ENCODE measurements at regions of chr17 and their contacts with region 1.

Region 1: GRCh38 chr17:66255112-66255511 is 25.9 kb upstream of the APOH start:
- DNase-seq: peak; percentile 84
- H3K4me3 Mint-ChIP-seq: peak overlapping the region; percentile 66
- H3K27ac Mint-ChIP-seq: peak overlapping the region; percentile 52
- H3K4me1 Mint-ChIP-seq: peaks cover 15% of the 10 kb centered on the region
- H3K27me3 Mint-ChIP-seq: no peaks in the 10 kb centered on the region

Region 2: GRCh38 chr17:65914784-65915350 is 340.2 kb before region 1 on chr17:
- intact Hi-C with region 1: no loop called
- DNase-seq: peak; percentile 61
- H3K4me3 Mint-ChIP-seq: peak overlapping the region; percentile 6
- H3K27ac Mint-ChIP-seq: peak overlapping the region; percentile 80
- H3K4me1 Mint-ChIP-seq: peaks cover 13% of the 10 kb centered on the region
- H3K27me3 Mint-ChIP-seq: no peaks in the 10 kb centered on the region

Region 3: DNA sequence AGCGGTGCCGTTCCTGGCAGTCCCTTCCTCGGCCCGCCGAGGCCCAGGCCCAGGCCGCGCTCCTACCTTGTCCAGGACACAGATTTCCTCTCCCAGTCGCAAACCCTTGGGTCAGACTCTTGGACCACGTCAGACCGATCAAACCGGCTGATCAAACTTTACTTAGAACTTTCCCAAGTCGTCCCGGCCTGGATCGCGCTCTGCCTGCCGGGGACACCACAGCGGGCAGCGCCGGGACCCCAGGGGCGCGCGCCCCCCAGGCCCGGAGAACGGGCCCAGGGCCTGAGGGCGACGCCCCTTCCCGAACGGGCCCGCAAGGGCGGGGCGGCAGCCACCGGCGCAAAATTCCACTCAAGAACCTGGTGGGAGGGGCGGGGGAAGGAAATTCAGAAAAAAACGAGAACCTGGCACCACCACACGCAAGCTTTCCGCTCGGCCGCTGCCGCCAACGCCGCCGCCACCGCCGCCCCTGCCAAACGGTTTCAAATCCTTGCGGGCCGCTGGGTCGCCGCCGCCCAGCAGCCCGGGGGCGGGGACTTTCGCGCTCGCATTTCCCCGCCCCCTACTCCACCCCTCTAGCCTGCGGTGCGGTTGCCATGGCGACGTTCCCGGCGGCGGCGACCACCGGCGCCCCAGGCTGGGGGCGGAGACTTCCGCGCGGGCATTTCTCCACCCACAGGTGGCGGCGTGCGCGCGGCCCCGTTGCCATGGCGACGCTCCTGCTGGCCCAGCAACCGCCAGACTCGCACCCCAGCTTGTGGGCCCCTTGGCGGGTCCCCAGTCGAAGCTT is 63.3 kb before region 1 on chr17 and contains the start of gene CEP112:
- intact Hi-C with region 1: no loop called
- DNase-seq: peak; percentile 96
- H3K4me3 Mint-ChIP-seq: peak within 1 kb of the TSS; percentile 85
- H3K27ac Mint-ChIP-seq: peak within 1 kb of the TSS; percentile 84
- H3K4me1 Mint-ChIP-seq: peaks cover 15% of the 10 kb centered on the region
- H3K27me3 Mint-ChIP-seq: peaks cover 2% of the 10 kb centered on the region
- total RNA-seq, gene CEP112: 1.3 and 2.0 TPM in 2 replicates

Region 4: GRCh38 chr17:66426397-66427033 is 171.4 kb after region 1 on chr17:
- intact Hi-C with region 1: loop called (anchors 1 kb)
- DNase-seq: peak; percentile 87
- H3K4me3 Mint-ChIP-seq: peak overlapping the region; percentile 28
- H3K27ac Mint-ChIP-seq: peak overlapping the region; percentile 59
- H3K4me1 Mint-ChIP-seq: peaks cover 66% of the 10 kb centered on the region
- H3K27me3 Mint-ChIP-seq: no peaks in the 10 kb centered on the region

Region 5: DNA sequence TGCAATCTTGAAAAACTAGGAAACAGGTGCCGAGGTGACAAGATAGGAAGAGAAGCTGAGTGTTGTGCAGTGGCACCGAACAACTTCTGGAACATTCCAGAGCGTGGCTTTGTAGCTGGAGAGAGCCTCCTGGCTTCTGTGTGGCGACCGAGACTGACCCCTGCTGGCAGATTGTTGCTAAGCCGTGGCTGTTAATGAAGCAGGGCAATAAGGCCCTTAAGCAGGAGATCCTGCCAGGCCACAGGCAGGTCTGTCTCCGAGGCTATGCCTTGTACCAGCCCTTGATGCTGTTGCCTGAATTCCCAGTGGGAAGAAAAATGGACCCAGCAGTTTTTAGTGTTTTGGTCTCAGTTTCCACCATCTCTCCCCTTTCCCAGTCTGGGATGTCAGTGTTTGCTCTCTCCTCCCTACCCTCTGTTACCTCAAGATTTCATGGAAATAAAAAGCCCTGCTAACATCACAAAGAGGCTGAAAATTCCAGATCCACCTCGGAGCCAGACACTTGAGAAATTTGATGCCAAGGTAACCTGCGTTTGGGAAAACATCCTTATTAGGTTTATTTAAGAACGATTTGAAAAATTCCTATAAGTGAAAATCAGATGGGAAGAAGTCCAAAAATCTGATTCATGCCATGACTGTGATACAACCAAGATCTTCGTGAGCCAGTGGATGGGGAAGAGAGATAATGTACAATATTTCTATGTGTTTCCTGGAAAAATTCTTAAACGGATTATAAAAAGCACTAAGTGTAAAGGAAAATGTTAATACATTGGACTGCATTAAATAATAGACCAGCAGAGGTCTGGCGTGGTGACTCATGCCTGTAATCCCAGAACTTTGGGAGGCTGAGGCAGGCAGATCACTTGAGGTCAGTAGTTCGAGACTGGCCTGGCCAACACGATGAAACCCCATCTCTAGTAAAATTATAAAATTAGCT is 312.4 kb after region 1 on chr17:
- intact Hi-C with region 1: loop called (anchors 1 kb)
- DNase-seq: peak; percentile 93
- H3K4me3 Mint-ChIP-seq: no peak overlapping the region
- H3K27ac Mint-ChIP-seq: peak overlapping the region; percentile 14
- H3K4me1 Mint-ChIP-seq: peaks cover 34% of the 10 kb centered on the region
- H3K27me3 Mint-ChIP-seq: no peaks in the 10 kb centered on the region

Region 6: DNA sequence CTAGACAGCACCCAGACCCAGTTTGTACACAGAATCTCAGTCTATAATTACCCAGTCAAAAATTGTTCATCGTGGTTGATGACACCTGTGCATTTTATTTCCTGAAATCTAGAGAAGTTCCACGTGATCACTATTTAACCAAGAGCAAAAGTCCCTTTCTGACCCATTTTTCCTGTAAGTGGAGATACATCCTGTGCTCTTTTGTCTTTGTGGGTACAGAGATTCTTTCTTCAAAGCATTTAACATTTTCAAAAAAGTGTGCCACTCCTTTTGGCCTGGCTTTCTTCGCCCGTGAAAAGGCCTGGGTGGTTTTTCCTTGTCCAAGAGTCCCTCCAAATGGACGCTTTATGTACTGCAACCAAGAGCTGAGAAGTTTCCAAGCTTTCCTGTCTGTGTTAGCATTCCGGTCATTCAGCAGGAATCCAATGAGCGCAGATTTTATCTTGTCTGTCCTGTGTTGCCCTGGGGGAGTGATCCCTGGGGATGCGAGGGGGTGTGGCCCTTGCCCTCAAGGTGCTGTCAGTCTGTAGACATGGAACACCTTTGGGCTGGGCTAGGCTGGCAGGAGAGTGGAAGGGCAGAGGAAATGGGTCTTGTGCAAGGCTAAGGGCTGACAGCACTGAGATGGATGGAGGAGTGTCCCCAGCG is 418.7 kb after region 1 on chr17:
- intact Hi-C with region 1: loop called (anchors 1 kb)
- DNase-seq: peak; percentile 86
- H3K4me3 Mint-ChIP-seq: peak overlapping the region; percentile 63
- H3K27ac Mint-ChIP-seq: peak overlapping the region; percentile 69
- H3K4me1 Mint-ChIP-seq: peaks cover 60% of the 10 kb centered on the region
- H3K27me3 Mint-ChIP-seq: no peaks in the 10 kb centered on the region